Lower leg skin (tissue), 4 donors: ENCODE measurements at regions of chr2 and their contacts with region 1.

Region 1: GRCh38 chr2:43484323-43484930 is 111.4 kb downstream of the THADA start:
- DNase-seq: no peak
- H3K4me3 ChIP-seq: no peak overlapping the region
- CTCF ChIP-seq: peak in 1 of 3 donors; percentile 38
- POLR2A ChIP-seq: no peak

Region 2: DNA sequence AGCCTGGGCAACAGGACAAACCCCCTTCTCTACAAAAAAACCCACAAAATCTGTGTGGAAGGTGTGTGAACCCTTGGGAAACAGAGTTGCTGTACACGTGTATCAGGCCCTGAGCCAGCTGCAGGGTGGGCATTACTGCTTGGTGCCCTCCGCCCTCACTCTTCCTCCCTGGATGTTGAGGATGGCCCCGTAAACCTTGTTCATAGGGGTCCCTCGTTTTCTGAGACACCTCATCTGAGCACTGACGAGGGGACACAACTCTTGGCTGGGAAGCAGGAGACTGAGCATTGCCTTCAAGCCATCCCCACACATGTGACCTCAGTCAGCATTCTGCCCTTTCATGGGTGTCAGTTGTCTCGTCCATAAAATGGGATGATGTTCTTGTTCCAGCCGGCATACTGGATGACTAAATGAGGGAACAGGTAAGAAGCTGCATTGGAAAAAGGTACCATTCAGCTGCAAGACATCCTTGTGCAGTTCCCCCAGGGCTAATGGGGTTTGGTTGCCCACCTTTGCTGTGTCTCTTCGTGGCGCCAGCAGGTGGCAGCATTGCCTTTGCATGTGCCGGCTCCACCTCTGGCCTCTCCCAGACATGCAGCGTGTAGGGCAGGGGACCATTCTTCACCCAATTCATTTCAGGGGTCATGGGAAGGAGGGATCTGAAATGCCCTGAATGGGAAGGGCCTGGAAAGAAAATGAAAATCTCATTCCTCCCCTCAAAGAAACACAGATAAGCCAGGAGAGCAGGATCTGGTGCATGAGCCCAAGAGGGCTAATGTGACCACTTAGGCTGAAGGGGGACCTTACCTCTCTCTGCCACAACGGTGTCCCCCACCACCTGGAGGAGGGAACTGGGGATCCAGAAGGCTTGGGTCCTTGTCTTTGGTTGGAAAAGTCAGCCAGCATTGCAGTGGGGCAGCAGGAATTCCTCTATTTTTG is 655.7 kb before region 1 on chr2:
- intact Hi-C with region 1: loop called (anchors 5 kb)
- DNase-seq: peak; percentile 67 to 94
- H3K4me3 ChIP-seq: no peak overlapping the region
- CTCF ChIP-seq: peak in 1 of 3 donors; percentile 74
- POLR2A ChIP-seq: no peak

Region 3: DNA sequence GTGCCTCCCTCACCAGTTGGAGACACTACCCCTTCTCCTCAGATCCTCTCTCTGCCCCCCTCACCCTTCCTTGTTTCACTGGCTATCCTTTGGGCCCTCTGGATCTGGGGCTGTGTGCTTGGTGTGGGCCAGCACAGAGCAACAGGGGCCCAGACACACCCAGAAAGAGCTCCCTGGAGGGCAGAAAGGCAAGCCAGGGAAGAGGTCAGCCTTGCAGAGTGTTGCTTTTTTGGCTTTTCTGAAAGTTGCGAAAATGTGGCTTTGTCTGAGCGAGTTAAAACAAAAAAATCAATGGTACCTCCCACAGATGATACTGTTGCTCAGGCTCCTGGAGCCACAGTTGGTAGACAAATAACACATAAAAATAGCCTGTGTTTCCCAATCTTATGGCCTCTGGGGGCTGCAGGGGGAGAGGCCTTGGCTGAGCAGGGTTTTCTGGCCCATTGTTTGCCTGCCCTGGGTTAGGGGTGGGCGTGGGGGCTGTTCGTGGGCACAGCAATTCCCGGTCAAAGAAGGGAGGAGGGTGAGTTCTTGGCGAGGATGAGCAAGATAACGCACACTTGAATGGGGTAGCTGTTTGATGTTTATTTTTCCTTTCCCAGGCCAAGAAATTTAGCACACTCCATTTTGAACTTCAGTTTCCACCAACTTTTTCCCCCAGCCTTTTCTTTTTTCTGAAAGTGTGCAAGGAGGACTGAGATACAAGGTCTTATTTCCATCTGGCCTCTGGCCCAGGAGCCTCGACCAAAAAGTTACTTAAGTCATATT is 525.0 kb before region 1 on chr2:
- intact Hi-C with region 1: loop called (anchors 10 kb)
- DNase-seq: no peak
- H3K4me3 ChIP-seq: no peak overlapping the region
- CTCF ChIP-seq: no peak
- POLR2A ChIP-seq: no peak

Region 4: GRCh38 chr2:43519643-43520221 is 35.3 kb after region 1 on chr2:
- intact Hi-C with region 1: no loop called
- DNase-seq: peak in 1 of 2 donors; percentile 46
- H3K4me3 ChIP-seq: no peak overlapping the region
- CTCF ChIP-seq: no peak
- POLR2A ChIP-seq: no peak

Region 5: GRCh38 chr2:43611987-43612894 is 127.8 kb after region 1 on chr2:
- intact Hi-C with region 1: no loop called
- DNase-seq: peak; percentile 77 to 91
- H3K4me3 ChIP-seq: no peak overlapping the region
- CTCF ChIP-seq: peak in 1 of 3 donors; percentile 54
- POLR2A ChIP-seq: no peak